Lower lobe of right lung (tissue), 2 donors: ENCODE measurements at regions of chr9 and their contacts with region 1.

Region 1: GRCh38 chr9:131739980-131740648 is at the start of gene RAPGEF1:
- DNase-seq: peak; percentile 86
- ATAC-seq: peak; percentile 76 to 95
- H3K4me3 ChIP-seq: peak within 1 kb of the TSS; percentile 68
- H3K27ac ChIP-seq: peak within 1 kb of the TSS; percentile 91
- H3K4me1 ChIP-seq: peaks cover 48% of the 10 kb centered on the region
- H3K27me3 ChIP-seq: no peaks in the 10 kb centered on the region
- CTCF ChIP-seq: peak; percentile 79
- total RNA-seq, gene RAPGEF1: 146 TPM

Region 2: GRCh38 chr9:131432597-131433306 is 307.4 kb before region 1 on chr9:
- intact Hi-C with region 1: no loop called
- DNase-seq: no peak
- ATAC-seq: no peak
- H3K4me3 ChIP-seq: no peak overlapping the region
- H3K27ac ChIP-seq: no peak overlapping the region
- H3K4me1 ChIP-seq: peaks cover 12% of the 10 kb centered on the region
- H3K27me3 ChIP-seq: no peaks in the 10 kb centered on the region
- CTCF ChIP-seq: no peak

Region 3: GRCh38 chr9:131590908-131591844 is 148.9 kb before region 1 on chr9:
- intact Hi-C with region 1: loop called (anchors 5 kb)
- DNase-seq: peak; percentile 91
- ATAC-seq: peak; percentile 91 to 94
- H3K4me3 ChIP-seq: no peak overlapping the region
- H3K27ac ChIP-seq: no peak overlapping the region
- H3K4me1 ChIP-seq: no peaks in the 10 kb centered on the region
- H3K27me3 ChIP-seq: no peaks in the 10 kb centered on the region
- CTCF ChIP-seq: peak; percentile 79

Region 4: DNA sequence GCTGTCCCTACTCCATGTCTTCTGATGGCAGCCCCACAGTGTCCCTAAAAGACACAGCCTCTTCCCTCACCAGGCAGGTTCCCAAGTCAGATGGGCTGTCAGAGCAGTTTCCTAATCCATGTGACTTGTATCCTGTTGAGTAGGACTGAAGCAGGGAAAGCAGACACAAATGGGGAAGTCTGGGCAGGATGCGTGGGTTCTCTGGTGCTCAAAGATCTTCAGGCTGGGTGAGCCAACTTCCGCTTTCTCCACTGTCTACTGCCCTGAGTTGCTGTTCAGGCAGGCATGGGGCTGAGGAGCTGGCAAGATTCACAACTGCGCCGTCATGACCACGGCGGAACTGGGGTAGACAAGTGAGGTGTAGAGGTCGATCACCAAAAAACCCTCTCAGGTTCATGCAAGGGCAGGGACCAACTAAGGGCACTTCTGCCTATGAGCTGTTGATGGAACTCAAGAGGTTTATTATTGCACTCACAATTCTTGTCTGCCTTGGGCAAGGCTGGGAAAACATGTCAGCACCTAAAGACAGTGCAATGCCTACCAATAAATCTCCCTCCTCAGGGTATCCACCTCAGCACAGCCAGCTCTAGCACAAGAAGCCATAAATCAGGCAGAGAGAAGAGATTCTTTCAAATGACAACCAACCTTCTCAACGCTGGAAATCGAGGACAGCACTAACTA is 83.6 kb before region 1 on chr9:
- intact Hi-C with region 1: loop called (anchors 10 kb)
- DNase-seq: peak; percentile 93
- ATAC-seq: peak; percentile 81 to 93
- H3K4me3 ChIP-seq: no peak overlapping the region
- H3K27ac ChIP-seq: peak overlapping the region; percentile 76
- H3K4me1 ChIP-seq: peaks cover 74% of the 10 kb centered on the region
- H3K27me3 ChIP-seq: no peaks in the 10 kb centered on the region
- CTCF ChIP-seq: no peak

Region 5: GRCh38 chr9:131678499-131679111 is 61.5 kb before region 1 on chr9:
- intact Hi-C with region 1: no loop called
- DNase-seq: peak; percentile 67
- ATAC-seq: peak; percentile 95 to 96
- H3K4me3 ChIP-seq: no peak overlapping the region
- H3K27ac ChIP-seq: peak overlapping the region; percentile 80
- H3K4me1 ChIP-seq: peaks cover 76% of the 10 kb centered on the region
- H3K27me3 ChIP-seq: no peaks in the 10 kb centered on the region
- CTCF ChIP-seq: no peak

Region 6: DNA sequence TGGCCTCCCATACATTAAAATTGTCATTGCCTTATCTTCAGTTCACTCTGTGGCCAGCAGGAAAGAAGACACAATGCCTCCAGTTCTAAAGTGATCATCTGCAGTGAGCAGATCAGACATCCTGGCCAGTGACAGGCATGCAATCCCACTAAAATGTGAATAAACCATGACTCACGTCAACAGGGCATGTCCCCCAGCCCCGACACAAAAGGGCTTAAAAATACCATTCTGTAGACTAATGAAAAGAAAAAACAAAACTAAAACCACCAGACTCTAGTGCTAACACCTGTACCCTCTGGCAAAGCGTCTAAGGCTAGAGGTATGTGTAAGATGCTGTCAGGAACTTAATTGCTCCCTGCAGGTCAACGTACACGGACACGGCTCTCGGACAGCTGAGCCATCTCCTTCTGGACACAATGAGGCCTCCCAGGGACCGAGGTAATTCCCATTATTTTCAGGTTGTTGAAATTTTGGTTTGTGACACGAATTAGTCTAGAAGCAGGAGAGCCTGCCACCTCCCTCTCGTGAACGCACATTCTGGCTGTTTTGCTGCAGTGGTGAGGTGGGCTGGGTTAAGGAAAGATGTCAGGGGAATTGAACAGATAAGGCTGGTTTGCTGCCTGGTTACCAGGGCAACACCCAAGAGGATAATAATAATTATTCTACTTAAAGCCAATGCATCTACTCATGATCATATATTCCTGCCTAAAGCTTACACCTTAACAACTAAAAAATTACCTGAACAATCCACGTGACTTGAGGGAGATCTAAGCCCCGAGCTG is 891.4 kb after region 1 on chr9:
- intact Hi-C with region 1: no loop called
- DNase-seq: no peak
- ATAC-seq: no peak
- H3K4me3 ChIP-seq: no peak overlapping the region
- H3K27ac ChIP-seq: no peak overlapping the region
- H3K4me1 ChIP-seq: no peaks in the 10 kb centered on the region
- H3K27me3 ChIP-seq: no peaks in the 10 kb centered on the region
- CTCF ChIP-seq: no peak